ENCODE measurements at regions of chr9 and their contacts with region 1.

Region 1: GRCh38 chr9:132114102-132114707 is 34.5 kb upstream of the MED27 start:
- DNase-seq: peak in 1 of 3 donors; percentile 6
- H3K4me3 ChIP-seq: no peak overlapping the region
- H3K4me3 Mint-ChIP-seq: peak overlapping the region in 1 of 2 donors; percentile 31
- H3K27ac ChIP-seq: no peak overlapping the region
- H3K27ac Mint-ChIP-seq: no peak overlapping the region
- H3K4me1 ChIP-seq: no peaks in the 10 kb centered on the region
- H3K4me1 Mint-ChIP-seq: no peaks in the 10 kb centered on the region
- H3K27me3 ChIP-seq: no peaks in the 10 kb centered on the region
- H3K27me3 Mint-ChIP-seq: peaks cover 1 to 21% (median 13%) of the 10 kb centered on the region in 3 donors
- CTCF ChIP-seq: no peak

Region 2: GRCh38 chr9:132059361-132059760 is 54.8 kb before region 1 on chr9:
- intact Hi-C with region 1: loop called in 1 of 2 experiments (anchors 10 kb)
- DNase-seq: no peak
- H3K4me3 ChIP-seq: no peak overlapping the region
- H3K4me3 Mint-ChIP-seq: no peak overlapping the region
- H3K27ac ChIP-seq: no peak overlapping the region
- H3K27ac Mint-ChIP-seq: no peak overlapping the region
- H3K4me1 ChIP-seq: no peaks in the 10 kb centered on the region
- H3K4me1 Mint-ChIP-seq: peaks cover 9% of the 10 kb centered on the region
- H3K27me3 ChIP-seq: no peaks in the 10 kb centered on the region
- H3K27me3 Mint-ChIP-seq: no peaks in the 10 kb centered on the region
- CTCF ChIP-seq: no peak

Measured in CD14-positive monocyte (primary cell).